ENCODE measurements at regions of chr9 and their contacts with region 1.

Region 1: GRCh38 chr9:1005046-1005667 is 28.7 kb downstream of the DMRT3 start:
- DNase-seq: peak; percentile 30
- ATAC-seq: peak; percentile 65
- H3K4me3 ChIP-seq: no peak overlapping the region
- H3K27ac ChIP-seq: no peak overlapping the region
- H3K4me1 ChIP-seq: no peaks in the 10 kb centered on the region
- H3K27me3 ChIP-seq: no peaks in the 10 kb centered on the region
- CTCF ChIP-seq: peak; percentile 59

Region 2: GRCh38 chr9:406886-407654 is 598.1 kb before region 1 on chr9:
- CTCF ChIA-PET with region 1: no interaction called
- POLR2A ChIA-PET with region 1: no interaction called
- in situ Hi-C with region 1: no loop called
- intact Hi-C with region 1: no loop called
- DNase-seq: no peak
- ATAC-seq: no peak
- H3K4me3 ChIP-seq: no peak overlapping the region
- H3K27ac ChIP-seq: no peak overlapping the region
- H3K4me1 ChIP-seq: no peaks in the 10 kb centered on the region
- H3K27me3 ChIP-seq: no peaks in the 10 kb centered on the region
- CTCF ChIP-seq: no peak

Region 3: DNA sequence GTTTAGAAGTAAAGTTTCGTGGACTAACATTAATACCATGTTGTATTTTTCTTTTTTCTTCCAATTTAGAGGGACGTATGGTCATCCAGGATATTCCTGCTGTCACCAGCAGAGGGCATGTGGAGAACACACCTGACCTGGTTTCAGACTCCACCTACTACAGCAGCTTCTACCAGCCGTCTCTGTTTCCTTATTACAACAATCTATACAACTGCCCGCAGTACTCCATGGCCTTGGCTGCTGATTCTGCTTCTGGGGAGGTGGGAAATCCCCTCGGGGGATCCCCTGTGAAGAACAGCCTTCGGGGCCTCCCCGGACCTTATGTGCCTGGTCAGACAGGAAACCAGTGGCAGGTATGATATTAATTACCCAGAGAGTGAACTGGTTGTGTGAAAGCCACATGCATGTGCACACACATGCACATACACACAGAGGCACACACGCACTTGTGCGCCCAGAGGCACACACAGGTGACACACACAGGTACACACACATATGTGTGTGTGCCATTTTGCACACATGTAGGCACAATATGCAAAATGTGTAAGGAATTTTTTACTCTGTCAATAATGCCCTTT is 111.2 kb before region 1 on chr9:
- CTCF ChIA-PET with region 1: interaction called, 4 read pairs
- POLR2A ChIA-PET with region 1: no interaction called
- in situ Hi-C with region 1: no loop called
- intact Hi-C with region 1: loop called (anchors 2 kb)
- DNase-seq: peak; percentile 38
- ATAC-seq: 0 out of 2 replicates have a peak, but pooled peaks have one; percentile 62
- H3K4me3 ChIP-seq: no peak overlapping the region
- H3K27ac ChIP-seq: no peak overlapping the region
- H3K4me1 ChIP-seq: no peaks in the 10 kb centered on the region
- H3K27me3 ChIP-seq: no peaks in the 10 kb centered on the region
- CTCF ChIP-seq: peak; percentile 66

Region 4: DNA sequence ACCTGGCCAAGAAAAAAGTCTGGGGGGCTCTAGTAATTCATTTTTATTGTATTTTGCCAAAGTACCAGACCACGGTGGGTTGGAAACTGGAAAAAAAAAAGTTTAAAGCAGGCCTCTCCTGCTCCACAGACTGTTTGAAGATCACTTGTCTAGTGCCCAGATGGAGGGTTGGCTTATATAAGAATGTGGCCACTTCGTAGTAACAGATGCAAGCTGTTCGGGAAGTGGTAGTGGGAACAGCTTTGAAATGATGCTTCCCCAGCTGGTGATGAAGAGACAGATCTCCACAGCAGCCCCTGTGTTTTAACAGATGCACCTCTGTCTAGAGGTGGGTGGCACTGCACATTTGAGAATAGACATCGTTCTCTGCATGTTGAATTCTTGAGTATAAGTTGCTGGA is 83.0 kb before region 1 on chr9:
- CTCF ChIA-PET with region 1: interaction called, 10 read pairs
- POLR2A ChIA-PET with region 1: no interaction called
- in situ Hi-C with region 1: no loop called
- intact Hi-C with region 1: no loop called
- DNase-seq: no peak
- ATAC-seq: no peak
- H3K4me3 ChIP-seq: no peak overlapping the region
- H3K27ac ChIP-seq: no peak overlapping the region
- H3K4me1 ChIP-seq: no peaks in the 10 kb centered on the region
- H3K27me3 ChIP-seq: no peaks in the 10 kb centered on the region
- CTCF ChIP-seq: no peak

Region 5: DNA sequence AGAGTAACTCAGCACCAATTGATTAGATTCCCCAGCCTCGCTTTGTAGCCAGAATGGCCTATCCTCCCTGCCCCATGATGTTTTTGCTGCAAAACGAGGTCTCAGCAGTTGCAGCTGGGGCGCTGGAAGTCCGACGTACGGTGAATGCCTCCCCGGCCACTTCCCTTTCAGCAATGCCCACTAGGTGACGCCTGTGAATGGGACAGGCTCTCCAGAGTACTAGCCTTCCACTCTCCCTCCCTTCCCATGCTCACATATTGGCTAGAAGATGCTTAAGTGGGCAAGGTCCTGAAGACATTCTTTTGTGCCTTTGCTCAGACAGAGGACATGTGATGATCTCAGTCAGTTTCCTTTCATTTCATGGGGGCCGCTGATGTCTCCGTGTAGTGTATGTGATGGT is 95.8 kb after region 1 on chr9:
- CTCF ChIA-PET with region 1: no interaction called
- POLR2A ChIA-PET with region 1: no interaction called
- in situ Hi-C with region 1: no loop called
- intact Hi-C with region 1: no loop called
- DNase-seq: no peak
- ATAC-seq: no peak; the same call in 1 of the 2 replicates
- H3K4me3 ChIP-seq: no peak overlapping the region
- H3K27ac ChIP-seq: no peak overlapping the region
- H3K4me1 ChIP-seq: no peaks in the 10 kb centered on the region
- H3K27me3 ChIP-seq: no peaks in the 10 kb centered on the region
- CTCF ChIP-seq: peak; percentile 48